K562 (cell line): ENCODE measurements at regions of chr11 and their contacts with region 1.

Region 1: GRCh38 chr11:9534791-9535781 is 38.4 kb upstream of the WEE1 start:
- DNase-seq: peak; percentile 75 to 88 (median 78)
- ATAC-seq: peak; percentile 86
- H3K4me3 ChIP-seq: no peak overlapping the region
- H3K27ac ChIP-seq: no peak overlapping the region
- H3K4me1 ChIP-seq: peaks cover 11 to 15% of the 10 kb centered on the region in 2 experiments; a peak in 4 of 5 replicates
- H3K27me3 ChIP-seq: no peaks in the 10 kb centered on the region
- CTCF ChIP-seq: peak; percentile 88 to 96 (median 94)
- EP300 ChIP-seq: peak; percentile 32; the same call in 1 of the 2 replicates
- POLR2A ChIP-seq: no peak
- RAD21 ChIP-seq: peak; percentile 82 to 92

Region 2: DNA sequence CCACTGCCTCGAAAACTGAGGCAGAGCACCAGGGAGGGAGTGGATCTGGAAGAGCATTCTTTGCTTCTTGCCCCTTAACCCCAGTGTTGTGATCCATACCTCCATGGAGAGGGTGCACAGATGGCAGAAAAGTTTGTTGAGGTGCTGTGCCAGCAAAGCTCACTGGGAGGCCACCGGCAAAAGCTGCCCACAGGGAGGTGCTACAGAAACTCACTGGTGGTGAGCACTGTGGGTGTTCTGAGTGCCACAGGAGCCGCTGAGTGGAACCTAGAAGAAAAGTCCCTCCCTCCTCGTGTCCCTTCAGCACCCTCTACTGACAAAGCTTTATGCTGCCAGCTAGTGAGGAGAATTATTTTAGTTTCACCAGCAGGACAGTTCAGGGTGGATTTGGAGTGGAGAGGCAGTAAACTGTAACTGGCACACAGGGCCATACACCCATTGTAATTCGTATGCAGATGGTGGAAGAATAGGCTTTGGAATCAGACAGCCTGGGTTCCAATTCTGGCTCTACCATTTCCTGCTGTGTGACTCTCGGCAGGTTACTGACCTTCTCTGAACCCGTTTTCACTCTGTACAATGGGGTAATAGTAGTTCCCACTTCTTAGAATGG is 213.4 kb after region 1 on chr11:
- CTCF ChIA-PET with region 1: no interaction called
- POLR2A ChIA-PET with region 1: no interaction called
- in situ Hi-C with region 1: loop called (anchors 5 kb)
- intact Hi-C with region 1: loop called (anchors 1 kb)
- DNase-seq: peak; percentile 36 to 79 (median 56)
- ATAC-seq: peak; percentile 96
- H3K4me3 ChIP-seq: no peak overlapping the region
- H3K27ac ChIP-seq: no peak overlapping the region
- H3K4me1 ChIP-seq: peaks cover 0 to 4% of the 10 kb centered on the region in 2 experiments; a peak in 3 of 5 replicates
- H3K27me3 ChIP-seq: no peaks in the 10 kb centered on the region
- CTCF ChIP-seq: peak; percentile 89 to 93 (median 92)
- EP300 ChIP-seq: no peak
- POLR2A ChIP-seq: no peak
- RAD21 ChIP-seq: peak; percentile 95 to 96

Region 3: GRCh38 chr11:9808943-9809342 is 273.9 kb after region 1 on chr11:
- CTCF ChIA-PET with region 1: no interaction called
- POLR2A ChIA-PET with region 1: no interaction called
- in situ Hi-C with region 1: no loop called
- intact Hi-C with region 1: no loop called
- DNase-seq: no peak
- ATAC-seq: no peak
- H3K4me3 ChIP-seq: no peak overlapping the region
- H3K27ac ChIP-seq: no peak overlapping the region
- H3K4me1 ChIP-seq: no peaks in the 10 kb centered on the region
- H3K27me3 ChIP-seq: no peaks in the 10 kb centered on the region
- CTCF ChIP-seq: no peak
- EP300 ChIP-seq: no peak
- POLR2A ChIP-seq: no peak
- RAD21 ChIP-seq: no peak